KBM-7 (cell line): ENCODE measurements at regions of chr12 and their contacts with region 1.

Region 1: DNA sequence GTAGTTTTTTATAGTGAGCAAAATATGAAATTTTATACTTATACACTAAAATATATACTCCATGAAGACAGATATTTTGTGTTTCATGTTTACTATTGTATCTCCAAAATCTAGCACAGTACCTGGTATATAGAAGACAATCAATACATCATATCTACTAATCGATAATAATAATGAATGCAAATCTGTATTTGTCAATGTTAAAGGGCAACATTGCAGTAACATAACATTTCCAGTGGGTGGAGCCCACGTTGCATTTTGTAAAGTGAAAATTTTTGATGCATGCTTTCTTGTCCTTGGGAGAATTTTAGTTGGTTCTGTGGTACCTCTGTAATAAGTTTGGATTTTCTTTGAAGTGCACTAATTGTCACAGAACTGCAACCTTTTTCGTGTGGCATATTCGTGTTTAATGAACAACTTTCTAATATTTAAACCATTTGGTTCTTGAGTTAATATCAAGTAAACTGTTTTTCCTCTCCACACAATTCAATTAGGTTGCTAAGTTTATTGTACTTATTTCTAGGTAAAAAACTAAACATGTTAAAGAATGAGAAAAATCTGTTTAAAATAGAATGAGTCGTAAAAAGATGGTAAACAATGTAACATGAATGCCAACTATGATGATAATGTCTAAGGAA is 47.4 kb downstream of the AVPR1A start:
- DNase-seq: peak; percentile 48

Region 2: DNA sequence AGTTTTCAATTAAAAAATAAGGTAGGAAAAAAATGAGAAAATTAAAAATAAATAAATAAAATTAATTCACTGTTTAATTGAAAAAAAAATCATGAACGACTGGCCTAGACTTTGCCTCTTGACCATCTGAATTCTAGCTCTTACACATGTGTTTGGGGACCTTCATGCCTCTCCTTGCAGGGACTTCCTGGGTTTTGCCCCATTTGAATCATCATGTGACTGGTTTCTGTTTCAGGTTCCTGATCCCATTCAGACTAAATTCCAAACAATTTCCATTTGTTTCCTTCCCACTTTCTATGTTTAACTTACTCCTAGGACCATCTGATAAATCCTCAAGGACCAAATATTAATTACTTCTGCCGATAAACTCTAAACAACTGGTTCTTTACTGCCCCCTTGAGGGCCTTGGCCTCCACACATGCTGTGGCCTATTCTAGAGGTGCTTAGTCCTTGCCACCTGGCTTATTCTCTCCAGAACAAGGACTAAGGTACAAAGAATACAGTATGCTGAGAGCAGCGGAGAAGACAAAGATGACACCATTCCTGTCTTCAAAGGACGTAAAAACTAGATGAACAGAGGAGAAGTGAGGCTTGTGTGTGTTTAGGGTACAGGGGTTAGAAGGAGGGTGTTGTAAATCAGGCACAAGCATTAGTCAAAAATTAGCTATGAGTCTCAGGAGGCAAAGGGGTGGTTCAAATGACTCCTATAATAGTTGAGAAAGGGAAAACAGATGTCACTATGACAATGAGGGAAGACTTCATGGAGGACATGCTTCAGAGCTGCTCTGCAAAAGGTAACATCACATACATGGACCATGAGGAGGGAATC is 173.1 kb after region 1 on chr12:
- in situ Hi-C with region 1: loop called (anchors 25 kb)
- DNase-seq: peak; percentile 77

Region 3: GRCh38 chr12:64256166-64256800 is 1152.7 kb after region 1 on chr12:
- in situ Hi-C with region 1: loop called (anchors 25 kb)
- DNase-seq: peak; percentile 72